PC-3 (cell line): ENCODE measurements at regions of chr16 and their contacts with region 1.

Region 1: DNA sequence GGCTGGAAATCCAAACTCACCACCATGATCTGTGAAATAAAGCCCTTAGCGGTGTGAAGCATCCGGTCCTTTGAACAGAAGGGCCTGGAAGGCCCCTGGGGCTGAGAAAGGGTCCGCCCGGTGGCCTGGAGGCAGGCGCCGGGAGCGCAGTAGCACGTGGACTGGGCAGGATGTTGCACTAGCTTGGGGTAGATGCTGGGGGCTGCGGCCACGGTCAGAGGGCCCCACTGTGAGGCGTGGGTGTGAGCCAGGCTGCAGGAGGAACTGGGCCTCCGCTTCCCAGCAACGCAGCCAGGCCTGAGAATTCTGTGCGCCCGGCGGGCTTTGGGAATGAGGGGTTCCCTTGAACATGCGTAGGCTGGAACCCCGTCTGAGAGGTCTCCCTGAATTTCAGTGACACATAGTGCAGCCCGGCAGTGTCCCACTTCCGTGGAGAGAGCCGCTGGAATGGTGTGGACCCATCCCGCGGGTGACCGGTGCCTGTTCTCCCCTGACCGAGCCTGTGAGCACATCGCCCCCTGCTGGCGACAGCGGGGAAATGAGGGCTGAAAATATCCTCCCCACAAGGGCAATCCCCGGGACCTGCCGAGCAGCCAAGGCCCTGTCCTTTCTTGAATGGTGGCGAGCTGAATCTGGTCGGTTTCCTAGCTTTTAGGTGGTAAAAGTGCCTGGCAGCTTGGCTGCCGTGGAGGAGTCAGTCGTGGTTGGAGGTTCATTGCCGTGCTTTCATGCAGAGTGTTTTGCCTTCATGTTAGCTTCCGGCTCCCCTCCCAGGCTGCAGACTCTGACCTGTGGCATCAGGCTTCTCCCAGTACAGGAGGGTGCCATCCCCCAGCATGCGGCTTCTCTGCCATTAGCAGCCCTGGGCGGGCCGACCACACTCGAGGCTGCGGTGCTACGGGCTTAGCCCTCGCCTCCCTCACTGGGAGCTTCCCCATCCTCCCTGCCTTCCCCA is 43.8 kb downstream of the DNAJA2 start:
- DNase-seq: peak; percentile 64
- ATAC-seq: peak; percentile 77
- H3K4me3 ChIP-seq: no peak overlapping the region
- H3K27ac ChIP-seq: no peak overlapping the region
- H3K4me1 ChIP-seq: no peaks in the 10 kb centered on the region
- H3K27me3 ChIP-seq: no peaks in the 10 kb centered on the region
- CTCF ChIP-seq: peak; percentile 84

Region 2: GRCh38 chr16:46774743-46775177 is 154.9 kb before region 1 on chr16:
- CTCF ChIA-PET with region 1: no interaction called
- POLR2A ChIA-PET with region 1: no interaction called
- intact Hi-C with region 1: no loop called
- DNase-seq: no peak
- ATAC-seq: no peak
- H3K4me3 ChIP-seq: no peak overlapping the region
- H3K27ac ChIP-seq: no peak overlapping the region
- H3K4me1 ChIP-seq: no peaks in the 10 kb centered on the region
- H3K27me3 ChIP-seq: no peaks in the 10 kb centered on the region
- CTCF ChIP-seq: no peak

Region 3: DNA sequence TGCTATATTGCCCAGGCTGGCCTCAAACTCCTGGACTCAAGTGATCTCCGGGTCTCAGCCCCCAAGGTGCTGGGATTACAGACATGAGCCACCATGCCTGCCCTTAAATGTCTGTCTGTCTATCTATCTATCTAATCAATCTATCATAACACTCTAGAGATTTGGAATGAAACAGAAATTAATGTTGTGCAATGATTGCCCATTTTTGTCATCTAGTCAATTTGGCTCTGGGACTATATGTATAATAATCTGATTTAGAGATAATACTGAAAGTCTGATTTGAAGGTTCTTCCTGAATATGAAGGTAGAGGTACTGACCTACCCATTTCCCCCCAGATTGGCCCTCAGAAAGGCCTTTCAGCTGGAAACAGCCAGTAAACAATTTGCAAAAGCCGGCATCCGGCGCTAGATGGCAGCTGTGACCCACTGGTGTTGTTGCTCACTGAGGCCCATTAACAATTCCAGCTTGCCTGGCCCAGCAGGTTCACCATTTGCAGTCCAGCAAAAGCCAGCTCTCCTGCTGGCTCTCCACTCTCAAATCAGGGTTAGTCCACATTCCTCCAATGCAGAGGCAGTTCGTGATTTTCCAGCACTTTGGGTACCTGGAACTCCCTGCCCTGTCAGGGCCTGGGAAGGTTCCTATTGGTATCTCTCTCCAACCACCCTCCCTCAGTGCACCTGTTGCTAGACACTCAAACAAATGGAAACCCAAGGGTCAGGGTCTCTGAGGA is 75.8 kb before region 1 on chr16:
- CTCF ChIA-PET with region 1: interaction called, 7 read pairs
- POLR2A ChIA-PET with region 1: no interaction called
- intact Hi-C with region 1: loop called (anchors 5 kb)
- DNase-seq: peak; percentile 66
- ATAC-seq: peak; percentile 82
- H3K4me3 ChIP-seq: no peak overlapping the region
- H3K27ac ChIP-seq: no peak overlapping the region
- H3K4me1 ChIP-seq: no peaks in the 10 kb centered on the region
- H3K27me3 ChIP-seq: no peaks in the 10 kb centered on the region
- CTCF ChIP-seq: peak; percentile 86

Region 4: GRCh38 chr16:46896314-46896968 is 33.2 kb before region 1 on chr16:
- CTCF ChIA-PET with region 1: no interaction called
- POLR2A ChIA-PET with region 1: no interaction called
- intact Hi-C with region 1: no loop called
- DNase-seq: no peak
- ATAC-seq: no peak
- H3K4me3 ChIP-seq: no peak overlapping the region
- H3K27ac ChIP-seq: no peak overlapping the region
- H3K4me1 ChIP-seq: no peaks in the 10 kb centered on the region
- H3K27me3 ChIP-seq: no peaks in the 10 kb centered on the region
- CTCF ChIP-seq: no peak

Region 5: DNA sequence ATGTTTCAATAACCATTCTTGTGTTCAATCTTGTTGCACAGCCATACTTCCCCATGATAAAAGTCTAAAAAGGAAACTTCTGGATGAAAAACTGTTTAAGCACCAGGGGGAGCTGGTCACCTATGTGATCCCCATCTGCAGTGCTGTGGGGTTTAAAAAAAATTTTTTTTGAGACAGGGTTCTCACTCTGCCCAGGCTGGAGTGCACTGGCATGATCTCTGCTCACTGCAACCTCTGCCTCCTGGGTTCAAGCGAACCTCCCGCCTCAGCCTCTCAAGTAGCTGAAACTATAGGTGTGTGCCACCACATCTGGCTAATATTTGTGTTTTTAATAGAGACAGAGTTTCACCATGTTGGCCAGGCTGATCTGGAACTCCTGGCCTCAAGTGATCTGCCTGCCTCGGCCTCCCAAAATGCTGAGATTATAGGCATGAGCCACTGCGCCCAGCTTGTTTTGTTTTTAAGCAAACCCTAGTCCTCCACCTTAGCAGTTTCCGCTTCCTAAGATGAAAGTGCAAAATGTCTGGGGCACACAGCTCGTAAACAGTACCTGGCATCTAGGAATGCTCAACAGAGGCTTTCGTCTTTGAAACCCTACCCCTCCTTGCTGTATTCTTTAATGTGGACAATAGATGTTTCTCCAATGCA is 18.4 kb after region 1 on chr16:
- CTCF ChIA-PET with region 1: no interaction called
- POLR2A ChIA-PET with region 1: no interaction called
- intact Hi-C with region 1: no loop called
- DNase-seq: peak; percentile 53
- ATAC-seq: peak; percentile 69
- H3K4me3 ChIP-seq: no peak overlapping the region
- H3K27ac ChIP-seq: no peak overlapping the region
- H3K4me1 ChIP-seq: no peaks in the 10 kb centered on the region
- H3K27me3 ChIP-seq: no peaks in the 10 kb centered on the region
- CTCF ChIP-seq: peak; percentile 61

Region 6: DNA sequence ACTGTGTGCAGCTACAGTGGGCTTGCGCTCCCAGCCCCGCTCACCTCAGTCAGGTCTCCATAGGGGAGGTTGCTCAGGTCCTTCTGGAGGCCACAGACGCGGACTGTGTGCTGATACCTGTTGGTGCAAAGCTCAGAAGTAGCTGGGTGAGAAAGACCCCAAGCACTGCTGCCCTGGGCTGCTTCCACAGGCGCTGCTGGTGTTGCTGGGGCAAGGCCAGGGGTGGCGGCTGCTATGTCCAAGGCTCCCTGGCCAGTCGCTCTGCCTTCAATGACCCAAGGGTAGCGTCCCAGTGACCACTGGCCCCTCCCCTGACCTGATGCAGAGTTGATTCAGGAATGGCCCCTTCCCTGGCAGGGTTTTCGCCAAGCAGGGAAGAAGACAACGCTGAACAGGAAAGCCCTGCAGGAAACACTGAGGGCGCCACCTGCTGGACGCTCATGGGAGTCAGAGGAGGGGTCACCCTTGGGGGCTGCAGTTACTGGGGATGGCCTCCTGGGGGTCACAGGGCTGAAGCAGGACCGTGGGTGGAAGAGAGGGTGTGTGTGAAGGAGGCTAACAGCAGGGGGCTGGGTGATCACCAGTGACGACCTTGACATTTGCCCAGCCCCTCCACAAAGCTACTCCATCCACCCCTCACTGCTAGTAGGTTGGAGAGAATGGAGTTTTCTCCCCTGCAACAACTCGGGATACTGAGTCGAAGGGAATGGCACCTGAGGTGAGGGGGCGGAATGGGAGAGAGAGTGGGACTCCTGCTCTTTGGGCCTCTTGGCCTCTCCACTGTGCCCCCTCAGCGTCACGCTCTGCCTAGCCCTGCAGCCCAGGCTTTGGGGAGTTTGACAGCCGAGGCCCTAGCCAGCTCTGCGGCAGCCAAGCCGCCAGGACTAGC is 1187.8 kb after region 1 on chr16:
- CTCF ChIA-PET with region 1: no interaction called
- POLR2A ChIA-PET with region 1: interaction called, 11 read pairs
- intact Hi-C with region 1: no loop called
- DNase-seq: peak; percentile 56
- ATAC-seq: peak; percentile 43; the same call in 1 of the 2 replicates
- H3K4me3 ChIP-seq: no peak overlapping the region
- H3K27ac ChIP-seq: no peak overlapping the region
- H3K4me1 ChIP-seq: peaks cover 7% of the 10 kb centered on the region
- H3K27me3 ChIP-seq: no peaks in the 10 kb centered on the region
- CTCF ChIP-seq: peak; percentile 85